AG04449 (cell line): ENCODE measurements at regions of chr6 and their contacts with region 1.

Region 1: DNA sequence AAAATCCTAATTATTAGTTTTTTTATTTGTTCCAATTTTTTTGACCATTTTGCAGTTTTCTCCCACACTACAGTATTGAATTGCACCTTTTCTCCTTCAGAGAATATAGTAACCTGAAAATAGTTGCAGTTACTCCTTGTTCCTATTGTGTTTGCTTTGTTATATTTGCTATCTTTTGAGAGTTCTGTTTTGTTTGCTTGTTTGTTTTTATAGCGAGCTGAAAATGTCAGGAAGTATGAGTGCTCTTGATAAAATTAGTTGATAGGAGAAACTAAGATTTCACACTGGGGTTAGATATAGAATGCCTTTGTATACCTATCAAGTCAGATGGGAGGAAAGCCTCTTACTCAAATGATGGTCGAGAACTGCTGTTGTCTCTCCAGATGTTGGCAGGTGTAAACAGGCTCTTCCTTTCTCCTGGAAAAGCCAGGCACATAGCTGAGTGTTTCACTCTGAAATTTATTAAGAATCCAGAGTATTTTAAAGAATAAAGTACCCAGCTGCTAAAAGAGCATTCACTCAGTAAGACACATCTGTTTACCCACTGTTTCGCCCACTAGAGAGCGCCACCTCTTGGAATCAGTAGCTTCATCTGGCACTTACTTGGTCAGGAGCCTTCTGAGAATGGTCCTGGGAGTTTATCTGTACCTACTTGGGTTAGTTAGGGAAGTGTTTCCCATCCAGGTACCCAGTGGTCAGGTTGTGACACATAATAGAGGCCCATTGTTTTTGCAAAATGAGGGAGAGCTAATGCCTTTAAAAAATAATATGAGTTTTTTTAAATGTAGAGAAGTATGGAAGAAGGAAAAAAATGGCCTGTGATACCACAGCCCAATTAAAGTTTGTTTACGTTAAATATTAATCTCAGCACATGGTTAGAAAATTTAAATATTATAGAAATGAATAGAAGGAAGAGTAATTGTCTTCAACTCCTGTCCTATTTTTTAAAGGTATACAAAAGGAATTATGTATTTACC is 11.2 kb downstream of the NT5DC1 start:
- DNase-seq: no peak
- H3K4me3 ChIP-seq: no peak overlapping the region
- CTCF ChIP-seq: peak; percentile 56

Region 2: DNA sequence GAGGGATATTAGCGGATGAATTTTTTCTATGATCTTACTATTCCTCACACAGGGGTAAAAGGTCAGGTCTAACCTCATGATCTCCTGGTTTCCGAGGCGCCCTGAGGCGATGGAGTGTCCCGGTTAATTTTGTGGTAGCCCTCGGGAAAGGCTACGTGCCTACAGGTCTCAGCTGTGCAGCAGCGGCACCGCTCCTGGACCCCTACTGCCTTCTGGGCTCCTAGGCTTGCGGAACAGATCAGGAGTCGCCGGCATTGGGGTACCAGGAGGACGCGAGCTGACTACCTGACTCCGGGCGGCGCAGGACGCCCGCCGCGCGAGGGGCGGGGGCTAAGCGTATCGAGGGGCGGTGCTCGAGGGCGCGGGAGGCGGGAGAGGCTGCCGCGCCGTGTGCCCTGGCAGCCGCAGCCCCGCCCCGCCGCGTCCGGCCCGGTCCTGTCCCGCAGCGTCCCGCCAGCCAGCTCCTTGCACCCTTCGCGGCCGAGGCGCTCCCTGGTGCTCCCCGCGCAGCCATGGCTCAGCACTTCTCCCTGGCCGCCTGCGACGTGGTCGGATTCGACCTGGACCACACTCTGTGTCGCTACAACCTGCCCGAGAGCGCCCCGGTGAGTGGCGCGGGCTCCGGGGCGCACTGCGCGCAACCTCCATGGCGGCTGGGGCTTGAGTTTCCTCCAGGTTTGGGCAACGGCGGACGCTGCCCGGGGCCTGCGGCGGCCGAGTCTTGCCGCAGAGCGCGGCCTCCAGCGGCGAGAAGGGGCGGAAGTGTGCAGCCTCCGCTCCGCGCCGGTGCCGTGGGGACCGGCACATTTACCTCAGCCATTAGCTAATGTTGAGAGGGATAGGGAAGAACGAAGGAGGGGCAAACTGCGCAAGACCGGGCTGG is 11.2 kb before region 1 on chr6 and contains the start of gene NT5DC1:
- CTCF ChIA-PET with region 1: interaction called, 44 read pairs
- POLR2A ChIA-PET with region 1: no interaction called
- DNase-seq: no peak
- H3K4me3 ChIP-seq: peak within 1 kb of the TSS; percentile 86
- CTCF ChIP-seq: peak; percentile 33

Region 3: GRCh38 chr6:116127771-116128493 is 16.1 kb after region 1 on chr6:
- CTCF ChIA-PET with region 1: interaction called, 108 read pairs
- POLR2A ChIA-PET with region 1: no interaction called
- DNase-seq: no peak
- H3K4me3 ChIP-seq: no peak overlapping the region
- CTCF ChIP-seq: no peak

Region 4: GRCh38 chr6:116136933-116137340 is 25.1 kb after region 1 on chr6:
- CTCF ChIA-PET with region 1: interaction called, 108 read pairs
- POLR2A ChIA-PET with region 1: no interaction called
- DNase-seq: no peak
- H3K4me3 ChIP-seq: no peak overlapping the region
- CTCF ChIP-seq: no peak

Region 5: DNA sequence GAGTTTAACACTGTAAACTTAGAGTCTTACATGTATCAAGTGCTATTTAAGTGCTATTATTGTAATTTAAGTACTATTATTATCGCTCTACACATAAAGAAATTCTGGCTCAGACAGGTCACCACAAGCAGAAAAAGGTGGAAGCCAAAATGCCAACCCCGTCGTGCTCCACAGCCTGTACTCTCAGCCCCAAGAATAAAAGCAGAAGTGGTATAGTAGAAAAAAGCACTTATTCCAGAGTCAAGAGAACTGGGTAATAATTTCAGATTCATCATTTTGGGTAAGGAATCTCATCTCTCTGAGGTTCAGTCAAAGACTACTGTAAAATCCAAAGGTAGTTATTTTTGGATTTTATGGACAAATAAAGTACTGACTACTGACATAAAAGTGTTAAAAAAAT is 555.8 kb after region 1 on chr6:
- CTCF ChIA-PET with region 1: no interaction called
- POLR2A ChIA-PET with region 1: no interaction called
- DNase-seq: no peak
- H3K4me3 ChIP-seq: peak overlapping the region; percentile 71
- CTCF ChIP-seq: no peak

Region 6: GRCh38 chr6:116847227-116847626 is 735.4 kb after region 1 on chr6:
- CTCF ChIA-PET with region 1: interaction called, 13 read pairs
- POLR2A ChIA-PET with region 1: no interaction called
- DNase-seq: no peak
- H3K4me3 ChIP-seq: no peak overlapping the region
- CTCF ChIP-seq: no peak